Prostate gland (tissue), 2 donors: ENCODE measurements at regions of chr13 and their contacts with region 1.

Region 1: DNA sequence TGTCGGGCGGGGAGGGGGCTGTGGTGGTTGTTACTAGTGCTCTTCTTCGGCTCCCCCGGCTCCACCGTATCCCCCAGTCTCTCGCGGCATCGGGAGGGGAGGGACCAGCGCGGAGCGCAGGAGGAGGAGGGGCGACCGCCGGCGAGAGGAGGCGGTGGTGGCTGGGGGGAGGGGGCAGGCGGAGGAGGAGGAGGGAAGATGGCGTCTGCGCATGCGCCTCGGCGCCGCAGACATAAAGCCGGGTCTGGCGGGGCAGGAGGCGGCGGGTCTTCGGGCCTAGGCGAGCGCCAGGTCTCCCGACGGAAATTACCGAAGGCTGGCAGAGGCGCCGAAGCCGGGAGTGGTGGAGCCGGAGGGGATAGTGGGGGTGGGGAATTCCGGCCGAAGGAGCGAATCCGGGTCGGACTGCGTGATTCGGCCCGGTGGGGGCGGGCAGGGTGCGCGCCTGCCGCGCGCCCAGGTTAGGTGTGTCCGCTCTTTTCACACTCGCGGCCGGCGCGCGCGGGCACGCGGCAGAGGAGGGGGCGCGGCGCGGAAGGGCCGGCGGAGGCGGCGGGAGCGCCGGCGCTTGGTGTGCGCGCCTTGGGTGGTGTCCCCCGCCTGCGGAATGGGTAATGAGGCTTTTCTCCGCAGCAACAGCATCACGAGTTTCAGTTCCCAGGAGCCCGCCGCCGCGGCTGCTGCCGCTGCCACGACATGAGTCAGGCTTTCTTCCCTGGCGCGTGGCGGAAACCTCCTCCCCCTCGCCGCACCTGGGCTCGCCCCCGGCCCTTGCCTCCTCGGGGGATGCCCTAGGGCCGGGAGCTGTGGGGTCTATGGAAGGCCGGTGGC is 1.3 kb upstream of the TSC22D1 start:
- DNase-seq: peak; percentile 96
- H3K4me3 ChIP-seq: peak overlapping the region; percentile 90 to 97
- H3K27ac ChIP-seq: peak overlapping the region; percentile 98
- H3K4me1 ChIP-seq: peaks cover 5% of the 10 kb centered on the region
- H3K27me3 ChIP-seq: no peaks in the 10 kb centered on the region
- CTCF ChIP-seq: no peak
- POLR2A ChIP-seq: peak; percentile 65

Region 2: DNA sequence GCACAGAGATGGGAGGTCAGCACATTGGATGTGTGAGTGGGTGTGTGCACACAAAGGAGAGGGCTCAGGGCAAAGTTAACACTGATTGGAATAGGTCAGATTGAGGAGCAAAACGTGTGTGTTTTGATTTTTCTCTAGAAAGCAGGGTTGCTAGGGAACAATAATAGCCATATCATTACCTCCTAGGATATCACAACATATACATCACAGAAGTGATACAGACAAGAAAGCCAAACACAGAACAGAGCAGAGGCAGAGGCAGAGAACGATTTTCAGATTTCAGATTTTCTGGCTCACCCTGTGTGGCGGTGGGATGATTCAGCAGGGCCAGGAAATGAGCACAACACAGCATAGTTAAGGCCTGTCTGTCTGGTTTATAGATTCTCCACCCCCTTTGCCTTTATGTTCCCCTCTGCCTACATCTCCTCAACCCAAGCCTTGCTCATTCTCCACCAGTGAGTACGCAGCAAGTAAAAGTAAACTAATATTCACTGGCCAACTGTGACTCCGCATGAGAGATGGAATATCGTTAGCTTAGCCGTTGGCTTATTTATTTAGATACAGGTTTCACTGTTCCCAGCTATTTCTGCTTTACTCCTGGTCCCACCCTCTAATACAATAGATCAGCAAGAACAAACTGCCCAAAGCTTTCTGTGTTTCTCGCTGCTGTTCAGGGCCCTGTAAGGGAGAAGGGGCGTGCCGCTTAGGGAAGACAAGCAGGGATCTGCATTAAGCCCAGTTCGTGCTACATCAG is 181.4 kb after region 1 on chr13:
- intact Hi-C with region 1: loop called (anchors 2 kb)
- DNase-seq: peak; percentile 15
- H3K4me3 ChIP-seq: no peak overlapping the region
- H3K27ac ChIP-seq: peak overlapping the region; percentile 85 to 86
- H3K4me1 ChIP-seq: peaks cover 14% of the 10 kb centered on the region
- H3K27me3 ChIP-seq: no peaks in the 10 kb centered on the region
- CTCF ChIP-seq: no peak
- POLR2A ChIP-seq: no peak

Region 3: DNA sequence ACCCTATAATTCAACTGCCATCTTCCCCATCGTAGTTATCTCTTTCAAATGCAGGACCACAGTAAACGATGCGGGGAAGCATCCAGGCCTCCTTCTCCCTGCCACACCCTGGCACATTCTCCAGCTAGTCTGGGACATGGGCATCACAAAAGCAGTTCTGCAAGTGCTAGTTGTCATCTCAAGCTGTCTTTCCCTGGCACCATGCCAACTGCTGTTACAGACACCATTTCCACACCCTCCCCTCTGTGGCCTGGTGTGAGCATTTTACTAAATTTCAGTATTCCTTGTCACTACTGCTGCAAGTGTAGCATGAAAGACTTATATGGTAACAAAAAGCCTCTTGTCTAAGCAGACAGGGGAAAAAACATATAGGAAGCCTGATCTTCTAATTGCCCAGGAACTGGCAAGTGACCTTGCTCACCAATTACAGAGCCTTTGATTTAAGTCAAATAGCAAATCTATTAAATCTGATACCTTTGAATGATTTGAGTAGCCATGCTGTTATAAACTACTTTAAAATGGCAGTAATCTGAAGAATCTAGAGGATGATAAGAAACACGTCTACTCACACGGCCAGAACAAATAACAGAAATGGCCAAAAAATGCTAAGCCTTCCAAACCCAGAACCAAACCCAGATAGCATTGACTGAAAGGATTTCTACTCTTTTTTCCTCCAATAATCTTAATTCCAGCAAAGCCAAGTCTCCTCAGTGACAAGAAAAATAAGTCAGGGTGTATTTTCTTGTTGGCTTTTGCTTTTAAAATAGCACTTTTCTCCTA is 232.8 kb after region 1 on chr13:
- intact Hi-C with region 1: no loop called
- DNase-seq: peak; percentile 54
- H3K4me3 ChIP-seq: no peak overlapping the region
- H3K27ac ChIP-seq: no peak overlapping the region
- H3K4me1 ChIP-seq: no peaks in the 10 kb centered on the region
- H3K27me3 ChIP-seq: no peaks in the 10 kb centered on the region
- CTCF ChIP-seq: no peak
- POLR2A ChIP-seq: no peak

Region 4: DNA sequence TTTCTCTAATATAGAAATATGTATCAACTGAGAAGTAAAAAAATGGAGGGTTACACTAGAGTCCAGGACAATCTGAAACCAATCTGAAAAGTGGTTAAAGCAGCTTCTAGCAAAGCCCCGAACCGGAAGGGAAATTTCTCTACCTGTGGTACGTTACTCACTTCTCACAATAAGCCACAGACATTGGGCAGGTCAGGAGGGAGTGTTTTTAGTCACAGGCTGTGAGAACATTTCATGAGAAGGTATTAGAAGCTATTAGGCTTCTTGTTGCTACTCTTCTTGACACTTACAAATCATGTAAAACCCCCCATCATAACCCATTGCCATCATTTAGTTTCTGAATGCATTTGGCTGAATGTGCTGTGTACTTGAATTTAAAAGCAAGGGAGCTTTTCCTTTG is 290.9 kb after region 1 on chr13:
- intact Hi-C with region 1: no loop called
- DNase-seq: no peak
- H3K4me3 ChIP-seq: no peak overlapping the region
- H3K27ac ChIP-seq: peak overlapping the region; percentile 83 to 88
- H3K4me1 ChIP-seq: peaks cover 3% of the 10 kb centered on the region
- H3K27me3 ChIP-seq: no peaks in the 10 kb centered on the region
- CTCF ChIP-seq: no peak
- POLR2A ChIP-seq: no peak